WTC11 (cell line): ENCODE measurements at regions of chr10 and their contacts with region 1.

Region 1: DNA sequence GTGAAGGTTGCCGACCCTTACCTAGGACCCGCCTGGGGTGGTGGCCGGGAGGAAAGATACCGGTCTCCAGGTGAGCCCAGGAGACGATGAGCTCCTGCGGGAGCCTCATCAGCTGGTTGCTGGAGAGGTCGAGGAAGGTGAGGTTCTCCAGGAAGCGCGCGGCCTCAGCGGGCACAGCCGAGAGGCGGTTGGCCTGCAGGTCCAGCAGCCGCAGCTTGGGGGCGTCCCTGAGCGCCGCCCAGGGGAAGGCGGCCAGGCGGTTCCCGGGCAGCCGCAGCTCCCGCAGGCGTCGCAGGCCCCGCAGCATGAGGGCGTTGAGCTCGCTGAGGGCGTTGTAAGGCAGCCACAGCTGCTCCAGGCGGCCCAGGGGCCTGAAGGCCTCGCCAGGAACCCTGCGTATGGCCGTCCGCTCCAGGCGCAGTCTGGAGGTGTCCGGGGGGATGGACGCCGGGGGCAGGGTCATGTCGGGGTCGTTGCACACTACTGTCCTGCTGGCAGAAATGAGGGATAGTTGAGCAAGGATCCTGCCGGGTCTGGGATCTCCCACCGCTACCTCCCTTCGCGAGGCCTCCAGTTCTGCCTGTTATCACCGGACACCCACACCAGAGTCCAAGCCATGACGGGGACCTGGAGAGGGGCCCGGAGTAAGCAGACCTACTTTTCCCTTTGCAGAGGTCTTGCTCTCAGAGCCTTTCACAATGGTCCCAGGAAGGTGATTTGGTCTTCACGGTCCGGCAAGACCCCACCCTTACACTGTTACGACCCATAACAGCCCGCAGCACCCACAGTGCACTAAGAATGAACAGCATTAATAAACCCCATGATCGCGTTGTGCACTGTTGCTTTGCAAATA is 3.9 kb downstream of the LRIT1 start:
- DNase-seq: peak; percentile 84
- ATAC-seq: peak; percentile 98
- H3K4me3 Mint-ChIP-seq: no peak overlapping the region
- H3K27ac Mint-ChIP-seq: no peak overlapping the region
- H3K4me1 Mint-ChIP-seq: 0 out of 2 replicates have a peak, but pooled peaks cover 4% of the 10 kb centered on the region
- H3K27me3 Mint-ChIP-seq: peaks cover 27% of the 10 kb centered on the region
- CTCF ChIP-seq: peak; percentile 86

Region 2: GRCh38 chr10:84053626-84054025 is 183.8 kb before region 1 on chr10:
- CTCF ChIA-PET with region 1: no interaction called
- POLR2A ChIA-PET with region 1: no interaction called
- DNase-seq: no peak
- ATAC-seq: no peak
- H3K4me3 Mint-ChIP-seq: no peak overlapping the region
- H3K27ac Mint-ChIP-seq: no peak overlapping the region
- H3K4me1 Mint-ChIP-seq: peaks cover 9% of the 10 kb centered on the region
- H3K27me3 Mint-ChIP-seq: no peaks in the 10 kb centered on the region; the same call in none of the 2 replicates
- CTCF ChIP-seq: no peak

Region 3: DNA sequence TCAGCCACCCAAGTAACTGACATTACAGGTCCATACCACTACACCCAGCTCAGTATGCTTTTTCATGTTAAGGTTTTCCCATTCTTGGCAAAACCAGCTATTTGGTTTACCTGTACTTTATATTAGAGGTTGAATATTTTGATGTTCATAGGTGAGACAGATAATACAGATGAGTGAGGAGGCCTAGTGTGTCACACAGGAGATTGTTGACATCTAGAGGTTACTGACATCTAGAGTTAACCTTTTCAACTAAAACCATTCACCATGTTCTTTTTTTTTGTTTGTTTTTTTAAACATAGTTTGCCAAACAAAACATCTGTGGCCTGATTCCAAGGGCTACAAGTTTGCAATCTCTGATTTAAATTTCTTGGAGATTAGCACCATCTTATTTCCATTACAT is 90.1 kb before region 1 on chr10:
- CTCF ChIA-PET with region 1: interaction called, 10 read pairs
- POLR2A ChIA-PET with region 1: no interaction called
- DNase-seq: no peak
- ATAC-seq: no peak
- H3K4me3 Mint-ChIP-seq: no peak overlapping the region
- H3K27ac Mint-ChIP-seq: no peak overlapping the region
- H3K4me1 Mint-ChIP-seq: no peaks in the 10 kb centered on the region
- H3K27me3 Mint-ChIP-seq: no peaks in the 10 kb centered on the region
- CTCF ChIP-seq: no peak

Region 4: DNA sequence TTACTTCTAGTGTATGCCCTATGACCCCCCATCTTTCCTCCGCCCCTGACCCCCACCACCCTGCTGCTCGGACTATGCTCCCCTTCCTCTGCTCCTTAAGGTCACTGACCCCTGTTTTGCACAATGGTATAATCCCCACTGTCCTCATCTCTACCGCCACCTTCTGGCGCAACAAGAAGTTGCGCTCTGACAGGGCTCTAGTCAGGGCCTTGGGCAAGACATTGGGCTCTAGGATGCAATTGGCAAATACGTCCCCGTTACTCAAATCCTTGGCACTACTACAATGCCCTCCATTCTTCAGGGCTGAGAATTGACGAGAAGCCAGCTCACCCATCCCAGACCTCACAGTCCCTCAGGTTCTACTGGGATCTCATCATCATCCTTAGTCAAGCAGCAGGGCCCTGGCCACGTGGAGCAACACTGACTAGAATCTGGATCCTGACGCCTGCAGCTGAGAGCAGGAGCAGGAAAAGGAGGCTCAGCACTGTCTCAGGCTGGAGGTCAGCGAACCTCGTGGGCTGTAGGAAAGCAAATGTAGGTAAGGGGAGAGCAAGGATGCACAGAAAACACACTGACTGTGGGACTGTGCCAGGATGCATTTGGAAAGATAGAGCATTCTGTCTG is 22.7 kb before region 1 on chr10:
- CTCF ChIA-PET with region 1: interaction called, 14 read pairs
- POLR2A ChIA-PET with region 1: no interaction called
- DNase-seq: peak; percentile 75
- ATAC-seq: peak; percentile 96
- H3K4me3 Mint-ChIP-seq: no peak overlapping the region
- H3K27ac Mint-ChIP-seq: no peak overlapping the region
- H3K4me1 Mint-ChIP-seq: peaks cover 4% of the 10 kb centered on the region; the same call in 1 of the 2 replicates
- H3K27me3 Mint-ChIP-seq: peaks cover 5% of the 10 kb centered on the region
- CTCF ChIP-seq: peak; percentile 61; the same call in 1 of the 2 replicates

Region 5: DNA sequence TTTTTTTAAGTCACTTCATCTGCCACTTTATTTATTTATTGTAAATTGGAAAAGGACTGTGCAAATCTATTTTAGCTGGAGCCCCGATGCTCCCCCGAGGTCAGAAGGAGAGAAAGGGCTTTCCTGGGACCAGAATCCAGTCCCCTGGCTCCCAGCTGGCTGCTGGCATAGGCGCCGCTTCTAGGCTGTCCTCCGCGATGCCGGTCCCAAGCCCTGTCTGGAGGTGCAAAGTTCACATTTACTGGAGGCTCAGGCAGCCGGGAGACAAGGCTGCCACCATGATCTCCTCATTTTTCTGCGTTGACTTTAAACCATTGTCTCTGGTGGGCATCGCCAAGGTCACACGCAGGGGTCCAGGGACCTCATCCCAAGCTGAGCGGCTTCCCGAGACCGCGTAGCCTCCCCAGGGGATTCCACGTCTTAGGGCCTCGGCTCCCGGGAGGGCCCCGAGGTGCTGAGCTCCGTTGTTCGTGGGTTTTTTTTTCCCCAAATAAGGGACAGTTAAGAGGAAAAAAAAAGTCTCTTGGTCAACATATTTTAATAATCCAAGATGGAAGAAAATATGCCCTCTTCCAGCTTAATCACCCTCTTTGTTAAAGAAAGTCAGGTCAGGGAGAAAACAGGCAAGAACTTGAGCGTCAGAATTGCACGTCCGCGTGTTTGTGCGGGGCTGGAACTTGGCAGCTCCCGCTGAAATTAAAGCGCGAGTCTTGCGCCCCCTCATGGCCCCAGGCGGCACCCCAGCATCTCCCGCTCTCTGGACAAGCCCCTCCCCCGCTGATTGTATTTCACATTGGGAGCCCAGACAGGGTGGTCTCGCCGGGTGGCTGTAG is 19.3 kb after region 1 on chr10:
- CTCF ChIA-PET with region 1: interaction called, 39 read pairs
- POLR2A ChIA-PET with region 1: no interaction called
- DNase-seq: peak; percentile 84
- ATAC-seq: peak; percentile 95
- H3K4me3 Mint-ChIP-seq: no peak overlapping the region
- H3K27ac Mint-ChIP-seq: no peak overlapping the region
- H3K4me1 Mint-ChIP-seq: 0 out of 2 replicates have a peak, but pooled peaks cover 3% of the 10 kb centered on the region
- H3K27me3 Mint-ChIP-seq: peaks cover 17% of the 10 kb centered on the region
- CTCF ChIP-seq: peak; percentile 76

Region 6: DNA sequence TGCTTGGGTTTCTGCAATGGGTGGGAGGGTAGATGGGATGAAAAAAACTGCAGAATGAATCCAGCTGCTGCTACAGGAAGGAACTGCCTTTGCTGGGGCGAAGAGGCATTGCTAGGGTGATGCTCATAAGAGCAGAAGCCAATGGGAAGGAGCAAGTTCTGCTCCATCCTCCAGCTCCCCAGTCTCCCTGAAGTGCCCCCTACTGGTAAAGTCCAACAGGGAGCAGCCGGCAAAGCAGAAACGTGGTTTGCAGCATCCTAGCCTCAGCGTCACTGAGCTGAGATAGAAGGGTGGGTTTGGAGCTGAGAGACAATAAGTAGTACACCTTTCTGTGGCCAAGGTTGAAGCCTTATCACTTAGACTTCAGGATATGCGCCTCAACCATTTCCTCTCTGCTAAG is 311.4 kb after region 1 on chr10:
- CTCF ChIA-PET with region 1: interaction called, 10 read pairs
- POLR2A ChIA-PET with region 1: no interaction called
- DNase-seq: peak; percentile 66
- ATAC-seq: peak; percentile 90
- H3K4me3 Mint-ChIP-seq: no peak overlapping the region
- H3K27ac Mint-ChIP-seq: no peak overlapping the region
- H3K4me1 Mint-ChIP-seq: no peaks in the 10 kb centered on the region
- H3K27me3 Mint-ChIP-seq: no peaks in the 10 kb centered on the region; the same call in 1 of the 2 replicates
- CTCF ChIP-seq: peak; percentile 44